Naive thymus-derived CD4-positive, alpha-beta T cell (primary cell): ENCODE measurements at regions of chr13 and their contacts with region 1.

Region 1: GRCh38 chr13:23741879-23742510 is 147.2 kb downstream of the MIPEP start:
- DNase-seq: no peak
- ATAC-seq: no peak
- H3K4me3 ChIP-seq: no peak overlapping the region
- H3K4me3 Mint-ChIP-seq: no peak overlapping the region
- H3K27ac ChIP-seq: no peak overlapping the region
- H3K27ac Mint-ChIP-seq: no peak overlapping the region
- H3K4me1 ChIP-seq: peaks cover 0 to 21% of the 10 kb centered on the region in 2 donors
- H3K4me1 Mint-ChIP-seq: peaks cover 17 to 35% (median 31%) of the 10 kb centered on the region in 7 donors
- H3K27me3 ChIP-seq: no peaks in the 10 kb centered on the region
- H3K27me3 Mint-ChIP-seq: peaks cover 0 to 41% (median 0%) of the 10 kb centered on the region in 5 donors

Region 2: GRCh38 chr13:22040810-22041371 is 1701.1 kb before region 1 on chr13:
- CTCF ChIA-PET with region 1: no interaction called
- POLR2A ChIA-PET with region 1: no interaction called
- intact Hi-C with region 1: no loop called
- DNase-seq: peak in 2 of 9 donors; percentile 13 to 16
- ATAC-seq: peak; percentile 65
- H3K4me3 ChIP-seq: no peak overlapping the region
- H3K4me3 Mint-ChIP-seq: peak overlapping the region; percentile 66 to 92 (median 80)
- H3K27ac ChIP-seq: no peak overlapping the region
- H3K27ac Mint-ChIP-seq: peak overlapping the region in 5 of 9 donors; percentile 28 to 92 (median 52)
- H3K4me1 ChIP-seq: no peaks in the 10 kb centered on the region
- H3K4me1 Mint-ChIP-seq: peaks cover 0 to 5% (median 2%) of the 10 kb centered on the region in 7 donors
- H3K27me3 ChIP-seq: no peaks in the 10 kb centered on the region
- H3K27me3 Mint-ChIP-seq: peaks cover 0 to 9% (median 0%) of the 10 kb centered on the region in 5 donors

Region 3: GRCh38 chr13:23695711-23696464 is 46.1 kb before region 1 on chr13:
- CTCF ChIA-PET with region 1: no interaction called
- POLR2A ChIA-PET with region 1: no interaction called
- intact Hi-C with region 1: loop called in 1 of 2 experiments (anchors 5 kb)
- DNase-seq: peak; percentile 25 to 71 (median 68)
- ATAC-seq: peak; percentile 88
- H3K4me3 ChIP-seq: peak overlapping the region; percentile 49
- H3K4me3 Mint-ChIP-seq: peak overlapping the region; percentile 73 to 86 (median 81)
- H3K27ac ChIP-seq: peak overlapping the region; percentile 62
- H3K27ac Mint-ChIP-seq: peak overlapping the region; percentile 87 to 98 (median 95)
- H3K4me1 ChIP-seq: peaks cover 0 to 9% of the 10 kb centered on the region in 2 donors
- H3K4me1 Mint-ChIP-seq: peaks cover 6 to 31% (median 24%) of the 10 kb centered on the region in 7 donors
- H3K27me3 ChIP-seq: no peaks in the 10 kb centered on the region
- H3K27me3 Mint-ChIP-seq: peaks cover 0 to 7% (median 0%) of the 10 kb centered on the region in 5 donors

Region 4: GRCh38 chr13:23754506-23754905 is 12.5 kb after region 1 on chr13:
- CTCF ChIA-PET with region 1: no interaction called
- POLR2A ChIA-PET with region 1: interaction called, 4 read pairs
- intact Hi-C with region 1: loop called in 1 of 2 experiments (anchors 1 kb)
- DNase-seq: peak in 6 of 9 donors; percentile 9 to 37 (median 20)
- ATAC-seq: peak; percentile 79
- H3K4me3 ChIP-seq: no peak overlapping the region
- H3K4me3 Mint-ChIP-seq: peak overlapping the region in 7 of 10 donors; percentile 22 to 70 (median 41)
- H3K27ac ChIP-seq: no peak overlapping the region
- H3K27ac Mint-ChIP-seq: peak overlapping the region in 8 of 9 donors; percentile 14 to 87 (median 62)
- H3K4me1 ChIP-seq: peaks cover 0 to 5% of the 10 kb centered on the region in 2 donors
- H3K4me1 Mint-ChIP-seq: peaks cover 10 to 28% (median 15%) of the 10 kb centered on the region in 7 donors
- H3K27me3 ChIP-seq: no peaks in the 10 kb centered on the region
- H3K27me3 Mint-ChIP-seq: peaks cover 0 to 3% (median 0%) of the 10 kb centered on the region in 5 donors

Region 5: GRCh38 chr13:23776698-23777574 is 34.9 kb after region 1 on chr13:
- CTCF ChIA-PET with region 1: no interaction called
- POLR2A ChIA-PET with region 1: no interaction called
- intact Hi-C with region 1: loop called in 1 of 2 experiments (anchors 5 kb)
- DNase-seq: no peak
- ATAC-seq: no peak
- H3K4me3 ChIP-seq: no peak overlapping the region
- H3K4me3 Mint-ChIP-seq: no peak overlapping the region
- H3K27ac ChIP-seq: no peak overlapping the region
- H3K27ac Mint-ChIP-seq: no peak overlapping the region
- H3K4me1 ChIP-seq: no peaks in the 10 kb centered on the region
- H3K4me1 Mint-ChIP-seq: peaks cover 0 to 28% (median 9%) of the 10 kb centered on the region in 7 donors
- H3K27me3 ChIP-seq: peaks cover 0 to 2% of the 10 kb centered on the region in 2 donors
- H3K27me3 Mint-ChIP-seq: no peaks in the 10 kb centered on the region

Region 6: GRCh38 chr13:23867027-23867491 is 125.1 kb after region 1 on chr13:
- CTCF ChIA-PET with region 1: no interaction called
- POLR2A ChIA-PET with region 1: no interaction called
- intact Hi-C with region 1: no loop called
- DNase-seq: no peak
- ATAC-seq: no peak
- H3K4me3 ChIP-seq: no peak overlapping the region
- H3K4me3 Mint-ChIP-seq: no peak overlapping the region
- H3K27ac ChIP-seq: no peak overlapping the region
- H3K27ac Mint-ChIP-seq: no peak overlapping the region
- H3K4me1 ChIP-seq: no peaks in the 10 kb centered on the region
- H3K4me1 Mint-ChIP-seq: peaks cover 0 to 2% (median 0%) of the 10 kb centered on the region in 7 donors
- H3K27me3 ChIP-seq: no peaks in the 10 kb centered on the region
- H3K27me3 Mint-ChIP-seq: no peaks in the 10 kb centered on the region

Region 7: DNA sequence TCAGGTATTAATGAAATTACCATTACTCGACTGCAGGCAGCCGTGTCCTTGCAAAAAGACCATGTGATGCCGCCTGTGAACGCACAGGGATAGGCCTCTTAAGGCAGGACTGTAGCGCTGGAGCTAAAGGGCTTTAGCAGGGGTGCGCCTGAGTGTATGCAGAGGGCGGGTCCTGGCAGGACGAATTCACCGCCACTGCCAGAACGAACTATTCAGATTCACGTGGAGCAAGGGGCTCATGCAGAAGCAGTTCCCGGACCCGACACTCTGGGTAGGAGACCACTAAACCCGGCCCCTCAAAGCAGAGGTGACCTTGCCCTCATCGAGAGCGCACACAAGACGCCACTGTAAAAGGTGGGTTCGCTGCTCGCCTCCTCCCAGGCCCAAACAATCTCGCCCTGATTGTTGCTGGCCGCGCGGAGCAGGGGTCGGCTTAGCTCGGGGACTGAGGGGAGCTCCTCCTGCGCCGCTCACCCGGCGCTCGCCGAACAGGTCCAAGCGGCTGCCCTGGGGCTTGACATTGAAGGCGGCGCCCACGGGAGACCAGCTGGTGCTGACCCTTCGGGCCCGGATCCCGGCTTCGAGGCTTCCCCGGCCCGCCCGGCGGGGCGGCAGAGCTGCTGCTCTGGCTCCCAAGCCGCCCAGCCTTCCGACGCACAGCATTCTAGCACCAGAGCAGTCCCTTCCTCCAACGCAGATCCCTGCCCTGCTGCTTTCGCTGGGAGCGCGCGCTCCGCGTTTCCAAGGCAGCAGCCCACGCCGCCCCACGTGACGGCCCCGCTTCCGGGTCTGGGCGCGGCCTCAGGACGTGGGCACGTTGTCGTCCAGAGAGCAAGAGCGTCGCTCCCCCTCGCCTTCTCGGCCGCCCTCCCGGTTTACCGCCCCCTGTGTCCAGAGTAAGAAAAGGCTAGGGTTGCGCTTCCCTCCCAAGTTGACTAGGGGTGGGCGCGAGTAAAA is 146.9 kb after region 1 on chr13 and contains the start of gene MIPEP:
- CTCF ChIA-PET with region 1: no interaction called
- POLR2A ChIA-PET with region 1: no interaction called
- intact Hi-C with region 1: loop called in 1 of 2 experiments (anchors 1 kb)
- DNase-seq: peak; percentile 68 to 94 (median 83)
- ATAC-seq: peak; percentile 98
- H3K4me3 ChIP-seq: peak within 1 kb of the TSS; percentile 88
- H3K4me3 Mint-ChIP-seq: peak within 1 kb of the TSS; percentile 85 to 96 (median 92)
- H3K27ac ChIP-seq: peak within 1 kb of the TSS; percentile 70
- H3K27ac Mint-ChIP-seq: peak within 1 kb of the TSS; percentile 72 to 92 (median 84)
- H3K4me1 ChIP-seq: peaks cover 0 to 5% of the 10 kb centered on the region in 2 donors
- H3K4me1 Mint-ChIP-seq: peaks cover 12 to 31% (median 25%) of the 10 kb centered on the region in 7 donors
- H3K27me3 ChIP-seq: no peaks in the 10 kb centered on the region
- H3K27me3 Mint-ChIP-seq: no peaks in the 10 kb centered on the region
- total RNA-seq, gene MIPEP: 8.0 to 10.5 (median 9.2) TPM